ENCODE measurements at regions of chr6 and their contacts with region 1.

Region 1: GRCh38 chr6:152982768-152983636 is at the start of gene FBXO5:
- DNase-seq: peak; percentile 98
- ATAC-seq: peak; percentile 84
- H3K4me3 Mint-ChIP-seq: peak within 1 kb of the TSS; percentile 99
- H3K27ac Mint-ChIP-seq: peak within 1 kb of the TSS; percentile 99
- H3K4me1 Mint-ChIP-seq: peaks cover 34% of the 10 kb centered on the region
- H3K27me3 Mint-ChIP-seq: no peaks in the 10 kb centered on the region
- total RNA-seq, gene FBXO5: 47.1 to 50.8 TPM

Region 2: GRCh38 chr6:152905551-152906299 is 77.3 kb before region 1 on chr6:
- POLR2A ChIA-PET with region 1: no interaction called
- DNase-seq: no peak
- ATAC-seq: no peak
- H3K4me3 Mint-ChIP-seq: no peak overlapping the region
- H3K27ac Mint-ChIP-seq: no peak overlapping the region
- H3K4me1 Mint-ChIP-seq: no peaks in the 10 kb centered on the region
- H3K27me3 Mint-ChIP-seq: peaks cover 5% of the 10 kb centered on the region

Region 3: DNA sequence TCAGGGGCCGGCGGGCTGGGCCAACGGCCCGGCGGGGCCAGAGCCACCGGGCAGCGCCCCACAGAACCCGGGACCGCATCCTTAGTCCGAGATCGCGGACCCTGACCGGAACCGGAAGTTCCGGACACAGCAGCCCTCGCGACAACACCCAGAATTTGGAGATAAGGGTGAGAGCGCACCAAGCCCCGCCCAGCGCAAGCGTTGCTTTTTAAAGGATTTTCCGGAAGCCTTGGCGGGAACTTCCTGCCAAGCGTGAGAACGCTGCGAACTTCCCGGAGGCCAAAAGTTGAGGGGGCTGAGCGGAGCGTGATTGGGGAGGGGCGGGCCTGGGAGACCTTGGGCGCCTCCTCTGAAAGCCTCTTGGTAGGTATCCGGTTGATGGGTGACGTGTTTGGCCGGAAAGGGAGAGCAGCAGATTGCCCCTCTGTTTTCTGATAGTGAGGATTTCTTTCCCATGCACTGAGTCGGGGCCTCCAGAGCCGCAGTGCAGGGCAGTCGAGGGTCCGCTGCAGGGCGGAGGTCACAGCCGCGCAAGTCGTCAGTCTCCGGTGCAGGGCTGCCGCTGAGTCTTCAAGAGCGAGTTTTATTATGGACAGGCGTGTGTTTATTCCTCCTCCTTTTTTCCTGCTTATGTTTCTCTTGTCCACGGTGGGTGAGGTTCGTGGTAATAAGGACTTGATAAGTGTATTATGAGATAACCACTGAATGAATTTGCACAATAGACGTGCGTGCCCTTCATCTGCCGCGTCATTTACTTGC is 19.8 kb after region 1 on chr6 and contains the start of gene MTRF1L:
- POLR2A ChIA-PET with region 1: interaction called, 43 read pairs
- DNase-seq: peak; percentile 82
- ATAC-seq: peak; percentile 92
- H3K4me3 Mint-ChIP-seq: peak within 1 kb of the TSS; percentile 98
- H3K27ac Mint-ChIP-seq: peak within 1 kb of the TSS; percentile 95
- H3K4me1 Mint-ChIP-seq: peaks cover 26% of the 10 kb centered on the region
- H3K27me3 Mint-ChIP-seq: no peaks in the 10 kb centered on the region
- total RNA-seq, gene MTRF1L: 16.5 to 17.2 TPM

Region 4: DNA sequence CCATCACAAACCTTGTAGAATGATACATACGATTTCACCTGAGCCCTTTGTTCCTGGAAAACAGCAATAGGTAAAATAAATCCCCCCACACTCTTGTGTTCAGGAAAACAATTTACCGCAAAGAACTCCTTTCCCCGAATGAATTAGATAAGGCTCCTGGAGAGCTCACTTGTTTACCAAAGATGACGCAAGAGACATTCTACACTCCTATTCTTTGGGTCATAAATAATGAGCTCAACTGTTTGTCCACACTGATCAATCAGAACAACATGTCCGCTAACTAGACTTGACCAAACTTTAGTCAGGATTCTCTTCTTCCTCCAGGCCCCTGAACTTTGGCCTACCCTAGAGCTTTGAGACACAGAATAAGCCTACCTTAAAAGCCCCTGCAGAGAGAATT is 784.1 kb after region 1 on chr6:
- POLR2A ChIA-PET with region 1: no interaction called
- DNase-seq: no peak
- ATAC-seq: no peak
- H3K4me3 Mint-ChIP-seq: no peak overlapping the region
- H3K27ac Mint-ChIP-seq: no peak overlapping the region
- H3K4me1 Mint-ChIP-seq: no peaks in the 10 kb centered on the region
- H3K27me3 Mint-ChIP-seq: no peaks in the 10 kb centered on the region